ENCODE measurements at regions of chr20 and their contacts with region 1.

Region 1: DNA sequence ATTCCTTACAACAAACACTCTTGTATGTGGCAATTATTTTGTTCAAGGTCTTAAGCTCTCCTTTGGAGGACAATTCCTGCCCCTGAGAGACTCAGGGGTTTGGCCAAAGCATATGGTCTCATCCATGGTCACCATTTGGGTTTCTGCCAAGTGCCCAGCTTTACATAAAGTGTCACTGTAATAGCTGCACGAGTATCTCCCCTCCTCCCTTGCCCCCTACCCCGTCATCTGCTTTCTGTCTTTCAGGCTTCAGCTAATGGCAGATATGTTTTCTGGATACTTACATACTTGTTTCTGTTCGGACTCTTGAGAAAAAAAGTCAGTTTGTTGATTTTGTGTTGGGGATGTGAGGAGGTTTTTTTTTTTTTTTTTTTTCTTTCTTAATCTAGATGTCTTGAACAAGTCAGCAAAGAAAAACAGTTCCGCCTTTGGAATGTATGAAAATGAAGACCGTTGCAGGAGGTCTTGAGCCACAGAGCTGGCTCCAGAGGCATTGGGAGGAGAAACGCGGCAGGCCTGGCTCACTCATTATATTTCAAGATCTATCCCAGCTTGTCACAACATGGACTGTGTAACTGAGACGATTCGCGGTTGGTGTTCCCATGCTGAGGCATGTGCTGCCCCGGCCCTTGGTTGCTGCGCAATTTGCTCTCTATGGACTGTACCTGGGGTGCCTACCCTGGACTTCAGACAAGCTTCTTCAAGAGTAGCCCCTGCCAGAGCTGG is 32.6 kb upstream of the STX16 start:
- DNase-seq: peak; percentile 59
- H3K4me3 ChIP-seq: no peak overlapping the region
- H3K27ac ChIP-seq: peak overlapping the region; percentile 82
- H3K27me3 ChIP-seq: no peaks in the 10 kb centered on the region
- CTCF ChIP-seq: no peak

Region 2: GRCh38 chr20:58361481-58362205 is 256.9 kb before region 1 on chr20:
- CTCF ChIA-PET with region 1: interaction called, 12 read pairs
- POLR2A ChIA-PET with region 1: no interaction called
- DNase-seq: no peak
- H3K4me3 ChIP-seq: no peak overlapping the region
- H3K27ac ChIP-seq: no peak overlapping the region
- H3K27me3 ChIP-seq: no peaks in the 10 kb centered on the region
- CTCF ChIP-seq: no peak

Region 3: DNA sequence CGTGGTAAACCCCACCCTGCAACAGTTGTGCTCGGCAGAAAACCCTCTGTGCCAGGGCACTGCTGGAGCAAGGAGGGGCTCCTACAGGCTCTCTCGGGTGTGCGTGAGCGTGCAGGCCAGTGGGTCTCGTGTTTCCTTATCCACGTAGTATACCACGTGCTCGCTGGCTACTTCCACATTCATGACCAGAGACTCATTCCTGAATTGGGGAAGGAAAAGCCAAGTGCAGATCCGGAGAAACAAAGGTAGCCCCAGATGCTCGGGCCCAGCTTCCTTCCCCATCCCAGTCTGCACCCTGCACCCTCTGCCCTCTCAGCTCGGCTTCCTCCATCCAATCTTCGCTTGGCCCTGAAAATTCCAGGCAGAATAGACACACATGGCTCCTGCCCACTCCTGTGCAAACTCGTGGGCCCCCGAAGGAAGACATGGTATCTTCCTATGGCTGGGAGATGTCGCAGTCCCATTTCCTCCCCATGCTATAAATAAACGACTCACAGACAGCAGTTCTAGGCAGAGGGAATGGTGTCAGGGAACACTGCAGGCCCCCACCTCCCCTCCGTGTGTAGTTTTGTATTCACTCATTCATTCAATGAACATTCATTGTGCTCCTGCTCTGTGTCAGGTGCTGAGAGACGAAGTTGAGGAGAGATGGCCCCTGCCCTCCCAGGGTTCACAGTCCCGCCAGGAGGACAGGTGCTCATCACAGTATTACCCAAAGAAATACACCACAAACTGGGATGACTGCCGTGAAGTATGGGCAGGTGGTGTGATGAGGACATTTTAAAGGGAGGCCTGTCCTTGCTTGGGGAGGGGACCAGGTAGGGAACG is 103.7 kb after region 1 on chr20:
- CTCF ChIA-PET with region 1: no interaction called
- POLR2A ChIA-PET with region 1: no interaction called
- DNase-seq: no peak
- H3K4me3 ChIP-seq: no peak overlapping the region
- H3K27ac ChIP-seq: no peak overlapping the region
- H3K27me3 ChIP-seq: peaks cover 36% of the 10 kb centered on the region
- CTCF ChIP-seq: no peak